ENCODE measurements at regions of chr4 and their contacts with region 1.

Region 1: GRCh38 chr4:141133146-141133998 is at the start of gene RNF150:
- DNase-seq: peak; percentile 76 to 88 (median 85)
- H3K4me3 ChIP-seq: peak within 1 kb of the TSS; percentile 95
- H3K27ac ChIP-seq: peak within 1 kb of the TSS; percentile 68 to 73
- H3K4me1 ChIP-seq: peaks cover 5% of the 10 kb centered on the region
- H3K27me3 ChIP-seq: no peaks in the 10 kb centered on the region
- CTCF ChIP-seq: peak; percentile 68 to 83 (median 79)
- EP300 ChIP-seq: no peak
- POLR2A ChIP-seq: peak; percentile 28
- total RNA-seq, gene RNF150: 14.7 to 43.2 (median 34.5) TPM

Region 2: DNA sequence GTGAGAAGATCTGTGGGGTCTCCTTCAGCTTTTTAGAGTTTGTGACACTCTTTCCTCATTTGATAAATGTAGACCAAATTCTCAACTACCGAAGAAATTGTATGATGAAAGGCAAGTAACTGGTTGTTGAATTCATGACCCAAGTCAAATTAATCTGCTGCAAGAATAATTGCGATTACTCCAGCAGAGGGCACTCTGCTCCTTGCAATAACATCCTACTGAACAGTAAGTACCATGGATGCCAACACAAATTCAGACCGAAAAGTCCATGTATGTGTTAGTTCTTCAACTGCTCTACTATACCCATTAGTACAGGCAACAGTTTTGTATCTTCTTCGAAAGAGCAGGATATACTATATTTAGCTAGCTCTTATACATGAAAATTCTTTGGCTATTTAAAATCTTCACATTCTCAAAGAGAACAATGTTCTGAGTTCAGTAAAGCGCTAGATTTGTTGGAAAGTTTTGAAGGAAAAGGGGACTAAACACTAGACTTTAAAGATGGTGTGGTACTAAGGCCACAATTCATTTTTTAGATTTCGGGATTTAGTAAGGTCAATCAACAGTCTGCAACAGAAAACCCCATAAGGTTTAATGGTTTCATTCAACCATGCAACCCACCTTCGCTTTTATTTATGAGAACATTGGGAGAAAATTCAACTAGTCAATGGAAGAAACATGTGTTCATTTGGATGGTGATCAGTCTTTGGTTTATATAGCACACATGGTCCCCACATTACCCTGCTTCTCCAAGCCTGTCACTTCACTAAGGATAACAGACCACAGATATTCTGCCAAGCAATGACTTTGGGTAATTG is 271.8 kb before region 1 on chr4:
- intact Hi-C with region 1: loop called (anchors 2 kb)
- DNase-seq: peak in 4 of 5 donors; percentile 50 to 81 (median 66)
- H3K4me3 ChIP-seq: no peak overlapping the region
- H3K27ac ChIP-seq: no peak overlapping the region
- H3K4me1 ChIP-seq: peaks cover 1% of the 10 kb centered on the region
- H3K27me3 ChIP-seq: no peaks in the 10 kb centered on the region
- CTCF ChIP-seq: peak; percentile 73 to 87 (median 86)
- EP300 ChIP-seq: no peak
- POLR2A ChIP-seq: no peak

Region 3: DNA sequence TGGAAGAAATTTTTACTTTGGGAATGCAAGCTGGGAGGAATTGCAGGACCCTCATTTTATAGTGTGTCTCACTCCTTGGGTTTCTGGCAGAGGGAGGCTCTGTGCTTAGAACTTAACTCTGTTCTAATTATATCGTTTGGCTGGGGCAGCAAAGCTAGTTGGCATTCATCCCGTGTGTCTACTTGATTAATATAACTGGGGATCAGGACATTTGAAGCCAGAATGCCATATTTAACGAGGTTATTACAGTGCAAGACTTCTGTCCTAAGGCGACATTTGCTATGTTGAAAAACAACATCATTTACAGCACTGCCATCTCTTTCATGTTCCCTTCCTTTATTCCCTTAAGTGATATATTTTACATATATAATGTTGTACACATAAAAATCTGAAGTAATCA is 198.1 kb before region 1 on chr4:
- intact Hi-C with region 1: loop called in 1 of 4 experiments (anchors 5 kb)
- DNase-seq: peak in 3 of 5 donors; percentile 14 to 32 (median 30)
- H3K4me3 ChIP-seq: no peak overlapping the region
- H3K27ac ChIP-seq: no peak overlapping the region
- H3K4me1 ChIP-seq: peaks cover 6% of the 10 kb centered on the region
- H3K27me3 ChIP-seq: no peaks in the 10 kb centered on the region
- CTCF ChIP-seq: no peak
- EP300 ChIP-seq: no peak
- POLR2A ChIP-seq: no peak

Region 4: DNA sequence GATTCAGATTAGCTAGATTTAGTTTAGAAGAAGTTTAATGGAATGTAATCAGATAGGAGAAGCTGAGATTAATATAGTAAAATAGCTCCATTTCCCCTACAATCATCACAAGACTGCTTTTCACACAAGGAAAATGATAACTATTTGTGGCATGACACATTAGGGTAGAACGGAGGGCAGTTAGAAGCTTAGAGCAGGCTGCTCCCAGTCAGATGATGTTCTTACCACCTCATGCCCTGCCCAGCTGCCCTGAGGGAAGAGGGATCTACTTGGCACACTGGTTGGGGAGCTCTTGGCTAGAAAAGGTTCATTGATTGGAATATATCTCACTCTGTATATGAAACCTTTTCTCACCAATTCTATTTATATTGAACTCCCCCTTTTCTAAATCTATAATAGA is 322.3 kb after region 1 on chr4:
- intact Hi-C with region 1: no loop called
- DNase-seq: no peak
- H3K4me3 ChIP-seq: no peak overlapping the region
- H3K27ac ChIP-seq: no peak overlapping the region
- H3K4me1 ChIP-seq: no peaks in the 10 kb centered on the region
- H3K27me3 ChIP-seq: no peaks in the 10 kb centered on the region
- CTCF ChIP-seq: no peak
- EP300 ChIP-seq: no peak
- POLR2A ChIP-seq: no peak